ENCODE measurements at regions of chr10 and their contacts with region 1.

Region 1: GRCh38 chr10:128211953-128212727 is 85.9 kb upstream of the MKI67 start:
- DNase-seq: no peak
- ATAC-seq: peak; percentile 94
- H3K4me3 ChIP-seq: peak overlapping the region; percentile 23 to 62
- H3K27ac ChIP-seq: no peak overlapping the region
- H3K4me1 ChIP-seq: no peaks in the 10 kb centered on the region
- H3K27me3 ChIP-seq: peaks cover 3% of the 10 kb centered on the region; the same call in 1 of the 2 replicates
- CTCF ChIP-seq: peak; percentile 100

Region 2: GRCh38 chr10:128086003-128086863 is 125.9 kb before region 1 on chr10:
- CTCF ChIA-PET with region 1: no interaction called
- POLR2A ChIA-PET with region 1: no interaction called
- in situ Hi-C with region 1: no loop called
- intact Hi-C with region 1: no loop called
- DNase-seq: no peak
- ATAC-seq: no peak
- H3K4me3 ChIP-seq: no peak overlapping the region
- H3K27ac ChIP-seq: no peak overlapping the region
- H3K4me1 ChIP-seq: no peaks in the 10 kb centered on the region
- H3K27me3 ChIP-seq: no peaks in the 10 kb centered on the region; the same call in 1 of the 2 replicates
- CTCF ChIP-seq: no peak

Region 3: GRCh38 chr10:128191847-128192246 is 20.3 kb before region 1 on chr10:
- CTCF ChIA-PET with region 1: interaction called, 10 read pairs
- POLR2A ChIA-PET with region 1: no interaction called
- in situ Hi-C with region 1: no loop called
- intact Hi-C with region 1: no loop called
- DNase-seq: no peak
- ATAC-seq: peak; percentile 91
- H3K4me3 ChIP-seq: no peak overlapping the region
- H3K27ac ChIP-seq: no peak overlapping the region
- H3K4me1 ChIP-seq: no peaks in the 10 kb centered on the region
- H3K27me3 ChIP-seq: no peaks in the 10 kb centered on the region
- CTCF ChIP-seq: no peak

Region 4: DNA sequence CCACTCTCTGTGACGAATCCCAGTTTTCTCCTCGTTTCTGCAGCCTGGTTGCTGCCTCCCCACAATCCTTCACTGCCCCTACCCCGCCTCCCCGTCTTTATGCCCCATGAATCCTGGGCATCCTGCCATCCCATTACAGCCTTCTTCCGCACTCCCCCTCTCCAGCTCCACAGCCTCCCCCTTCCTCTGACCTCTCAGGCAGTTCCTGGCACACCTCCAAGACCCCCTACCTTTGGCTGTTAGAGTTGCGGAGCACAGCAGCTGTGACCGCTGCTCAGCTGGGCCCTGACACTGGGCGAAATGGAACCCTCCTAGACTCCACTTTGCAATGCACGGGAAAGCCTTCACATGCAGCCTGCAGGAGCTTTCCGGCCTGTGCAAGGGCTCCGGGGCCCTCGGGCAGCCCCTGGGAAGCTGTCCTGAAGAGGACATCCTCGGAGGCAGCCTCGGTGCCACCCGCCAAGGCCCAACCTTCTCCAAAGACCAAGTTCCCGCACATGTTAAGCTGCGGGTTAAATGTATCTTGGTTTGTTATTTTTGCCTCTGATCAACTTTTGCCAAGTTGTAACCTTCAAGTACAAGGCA is 314.7 kb after region 1 on chr10:
- CTCF ChIA-PET with region 1: no interaction called
- POLR2A ChIA-PET with region 1: no interaction called
- in situ Hi-C with region 1: no loop called
- intact Hi-C with region 1: no loop called
- DNase-seq: no peak
- ATAC-seq: no peak
- H3K4me3 ChIP-seq: no peak overlapping the region
- H3K27ac ChIP-seq: no peak overlapping the region
- H3K4me1 ChIP-seq: no peaks in the 10 kb centered on the region
- H3K27me3 ChIP-seq: peaks cover 2% of the 10 kb centered on the region
- CTCF ChIP-seq: no peak

Region 5: DNA sequence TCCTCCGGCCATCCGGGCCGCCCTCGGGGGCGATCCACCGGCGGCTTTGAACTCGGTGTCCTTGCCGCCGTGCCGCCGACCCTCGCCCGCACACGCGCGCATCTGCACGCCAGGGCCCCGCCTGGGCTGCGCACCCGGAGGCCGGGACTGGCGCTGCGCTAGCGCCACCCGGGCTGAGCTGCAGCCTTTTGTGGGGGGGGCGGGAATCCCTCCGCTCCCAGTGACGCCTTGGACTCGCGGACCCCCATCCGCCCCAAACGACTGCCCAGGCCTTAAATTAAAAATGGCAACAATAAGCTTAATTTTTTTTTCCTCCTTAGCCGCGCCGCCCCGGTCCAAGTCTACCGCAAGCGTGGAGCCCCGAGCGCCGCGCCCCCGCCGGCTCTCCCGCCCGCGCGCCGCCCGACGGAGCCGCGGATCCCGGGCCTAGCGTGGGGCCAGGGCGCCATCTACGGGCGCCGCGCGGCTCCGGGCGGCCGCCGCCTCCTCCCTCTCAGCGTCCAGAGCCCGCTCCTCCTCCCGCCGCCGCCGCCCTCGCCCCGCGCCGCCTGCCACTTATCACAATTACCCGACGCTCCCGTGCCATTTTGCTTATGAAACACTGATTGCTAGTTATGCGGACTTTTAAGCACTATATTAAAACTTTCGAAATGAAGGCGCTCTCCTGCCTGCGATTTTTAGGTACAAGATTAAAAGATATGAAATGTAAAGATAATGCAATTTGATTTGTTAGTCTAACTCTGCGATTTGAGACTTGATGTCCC is 1759.4 kb after region 1 on chr10:
- CTCF ChIA-PET with region 1: no interaction called
- POLR2A ChIA-PET with region 1: no interaction called
- in situ Hi-C with region 1: no loop called
- intact Hi-C with region 1: loop called (anchors 2 kb)
- DNase-seq: no peak
- ATAC-seq: peak; percentile 96
- H3K4me3 ChIP-seq: peak overlapping the region; percentile 37 to 44
- H3K27ac ChIP-seq: no peak overlapping the region
- H3K4me1 ChIP-seq: peaks cover 9% of the 10 kb centered on the region
- H3K27me3 ChIP-seq: peaks cover 18% of the 10 kb centered on the region
- CTCF ChIP-seq: peak; percentile 99